ENCODE measurements at regions of chr16 and their contacts with region 1.

Region 1: DNA sequence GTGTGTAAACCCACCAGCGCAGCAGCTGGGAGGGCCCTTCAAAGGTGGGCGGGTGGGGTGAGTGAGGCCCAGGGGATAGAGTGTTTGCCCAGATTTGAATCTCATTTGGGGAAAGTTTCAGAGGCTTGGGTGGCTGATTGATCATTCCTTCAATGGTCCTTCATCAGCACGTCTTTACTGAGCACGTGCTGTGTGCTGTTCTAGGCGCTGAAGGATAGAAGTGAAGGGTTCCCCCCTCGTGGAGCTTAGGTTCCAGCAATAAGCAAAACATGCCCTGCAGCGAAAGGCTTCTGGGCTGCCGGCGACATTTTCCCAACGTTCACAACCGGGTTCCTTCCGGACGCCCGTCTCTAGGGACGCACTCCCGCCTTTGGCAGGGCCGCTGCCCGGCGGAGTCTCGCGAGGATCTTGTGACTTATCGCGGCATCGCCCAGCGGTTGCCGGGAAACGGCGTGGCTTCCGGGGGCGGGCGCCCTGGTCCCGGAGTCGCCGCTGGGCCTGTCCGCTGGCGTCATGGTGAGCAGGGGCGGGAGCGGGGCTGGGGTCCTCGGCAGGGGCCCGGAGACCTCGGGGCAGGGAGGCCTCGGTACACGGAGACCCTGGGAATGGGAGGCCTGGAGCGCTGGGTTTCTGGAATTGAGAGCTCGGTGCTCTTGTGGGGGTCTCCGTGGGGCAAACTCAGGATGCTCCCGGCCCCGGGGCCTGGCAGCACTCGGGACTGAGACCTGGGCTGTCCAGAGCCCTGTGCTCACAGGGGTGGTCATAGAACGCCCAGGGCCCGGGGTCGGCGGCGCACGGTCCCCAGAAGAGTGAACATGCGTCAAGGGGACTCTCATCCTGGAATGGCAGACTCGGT is 3.2 kb upstream of the DBNDD1 start:
- DNase-seq: peak; percentile 83
- H3K4me3 ChIP-seq: peak overlapping the region; percentile 68 to 81 (median 81)
- H3K27ac ChIP-seq: peak overlapping the region; percentile 63
- H3K4me1 ChIP-seq: peaks cover 33% of the 10 kb centered on the region
- H3K27me3 ChIP-seq: no peaks in the 10 kb centered on the region
- CTCF ChIP-seq: peak in 1 of 2 donors; percentile 3

Region 2: DNA sequence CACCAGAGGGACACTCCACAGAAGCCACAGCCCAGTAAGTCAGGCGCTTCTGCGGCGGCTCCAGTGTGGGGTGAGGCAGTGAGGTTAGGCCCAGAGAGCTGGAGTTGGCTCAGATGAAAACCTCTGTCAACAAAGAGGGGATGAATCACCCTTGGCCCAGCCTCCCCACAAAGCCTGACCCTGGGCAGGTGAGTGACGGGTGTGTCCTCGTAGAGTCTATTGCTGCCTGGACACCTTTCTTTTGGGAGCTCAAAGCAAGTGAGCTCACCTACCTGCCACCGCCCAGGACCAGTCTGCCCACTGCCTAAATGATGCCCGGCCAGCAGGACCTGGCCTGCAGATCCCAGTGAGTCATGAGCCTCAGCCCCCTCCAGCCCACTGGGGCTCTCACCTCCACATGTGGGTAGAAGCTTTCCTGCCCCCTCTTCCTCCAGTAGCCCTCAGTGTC is 21.7 kb after region 1 on chr16:
- CTCF ChIA-PET with region 1: no interaction called
- dilution Hi-C with region 1: no loop called
- in situ Hi-C with region 1: no loop called
- intact Hi-C with region 1: loop called (anchors 2 kb)
- DNase-seq: peak; percentile 95
- H3K4me3 ChIP-seq: no peak overlapping the region
- H3K27ac ChIP-seq: peak overlapping the region; percentile 45
- H3K4me1 ChIP-seq: peaks cover 29% of the 10 kb centered on the region
- H3K27me3 ChIP-seq: no peaks in the 10 kb centered on the region
- CTCF ChIP-seq: no peak

Region 3: GRCh38 chr16:90077226-90077756 is 54.9 kb after region 1 on chr16 and contains the start of gene PRDM7:
- CTCF ChIA-PET with region 1: no interaction called
- dilution Hi-C with region 1: no loop called
- in situ Hi-C with region 1: no loop called
- intact Hi-C with region 1: loop called (anchors 2 kb)
- DNase-seq: peak; percentile 96
- H3K4me3 ChIP-seq: peak within 1 kb of the TSS; percentile 31 to 48 (median 40)
- H3K27ac ChIP-seq: peak within 1 kb of the TSS; percentile 45
- H3K4me1 ChIP-seq: peaks cover 17% of the 10 kb centered on the region
- H3K27me3 ChIP-seq: no peaks in the 10 kb centered on the region
- CTCF ChIP-seq: no peak
- total RNA-seq, gene PRDM7: not detected